HEK293 (cell line): ENCODE measurements at regions of chr12 and their contacts with region 1.

Region 1: GRCh38 chr12:69570545-69571399 is 14.5 kb upstream of the CCT2 start:
- H3K4me3 ChIP-seq: no peak overlapping the region
- H3K27ac ChIP-seq: no peak overlapping the region
- H3K4me1 ChIP-seq: no peaks in the 10 kb centered on the region
- CTCF ChIP-seq: no peak

Region 2: DNA sequence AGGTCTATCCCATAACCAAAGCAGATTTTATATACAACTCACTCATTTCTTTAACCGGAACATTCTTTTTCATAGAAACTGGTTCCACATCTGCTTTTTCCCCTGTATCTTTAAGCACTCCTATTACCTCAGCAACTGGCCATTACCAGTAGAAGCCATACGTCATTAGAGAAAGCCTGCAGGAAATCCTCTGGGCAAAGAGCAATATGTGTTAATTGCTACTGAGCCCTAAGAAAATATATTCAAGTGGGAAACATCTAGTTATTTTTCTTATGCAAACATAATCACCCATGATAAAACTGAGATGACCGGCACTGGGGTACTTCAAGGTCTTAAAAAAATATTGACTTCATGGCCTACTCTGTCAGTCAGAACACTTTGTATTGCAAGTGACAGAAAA is 359.6 kb before region 1 on chr12:
- CTCF ChIA-PET with region 1: no interaction called
- POLR2A ChIA-PET with region 1: no interaction called
- H3K4me3 ChIP-seq: no peak overlapping the region
- H3K27ac ChIP-seq: no peak overlapping the region
- H3K4me1 ChIP-seq: no peaks in the 10 kb centered on the region
- CTCF ChIP-seq: no peak

Region 3: DNA sequence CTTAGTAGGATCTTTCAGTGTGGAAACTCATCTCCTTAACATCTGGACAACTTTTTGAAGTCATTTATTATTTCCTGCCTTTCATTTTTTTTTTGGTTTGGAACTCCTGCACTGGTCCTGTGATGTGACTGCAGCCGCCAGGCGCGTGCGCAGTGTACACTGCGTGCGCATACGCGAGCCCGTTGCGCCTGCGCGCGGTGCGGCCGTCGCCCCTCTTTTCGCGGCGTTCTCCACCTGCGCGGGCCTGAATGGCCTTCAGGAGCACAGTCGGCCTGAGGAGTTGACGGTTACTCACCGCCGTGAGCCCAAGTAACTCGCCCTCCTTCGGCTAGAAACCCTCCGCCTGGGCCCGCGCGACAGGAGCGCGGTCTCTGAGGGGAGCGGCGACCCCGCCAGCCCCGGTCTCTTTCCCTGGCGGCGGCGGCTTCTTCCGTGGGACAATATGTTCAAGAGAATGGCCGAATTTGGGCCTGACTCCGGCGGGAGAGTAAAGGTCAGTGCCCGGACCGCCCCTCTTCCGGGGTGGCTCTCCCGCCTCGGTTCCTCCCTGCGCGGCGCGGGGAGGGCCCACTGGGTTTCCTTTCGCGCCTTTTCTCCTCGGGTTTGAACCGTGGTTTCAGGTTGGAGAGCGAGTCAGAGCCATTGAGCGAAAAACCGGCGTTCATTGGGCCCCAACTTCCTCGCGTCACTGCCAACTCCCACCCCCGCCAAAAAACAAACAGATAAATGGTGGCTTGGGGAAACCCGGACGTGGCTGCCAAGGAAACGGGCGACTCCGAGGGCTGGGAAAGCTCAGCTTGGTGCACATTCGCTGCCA is 211.0 kb before region 1 on chr12 and contains the start of gene YEATS4:
- CTCF ChIA-PET with region 1: interaction called, 31 read pairs
- POLR2A ChIA-PET with region 1: interaction called, 3 read pairs
- H3K4me3 ChIP-seq: peak within 1 kb of the TSS; percentile 97
- H3K27ac ChIP-seq: peak within 1 kb of the TSS; percentile 98
- H3K4me1 ChIP-seq: peaks cover 3% of the 10 kb centered on the region; the same call in 1 of the 2 replicates
- CTCF ChIP-seq: no peak

Region 4: GRCh38 chr12:69470189-69471075 is 100.3 kb before region 1 on chr12 and contains the start of gene FRS2:
- CTCF ChIA-PET with region 1: interaction called, 38 read pairs
- POLR2A ChIA-PET with region 1: interaction called, 6 read pairs
- H3K4me3 ChIP-seq: peak within 1 kb of the TSS; percentile 98
- H3K27ac ChIP-seq: peak within 1 kb of the TSS; percentile 90
- H3K4me1 ChIP-seq: peaks cover 29% of the 10 kb centered on the region
- CTCF ChIP-seq: peak; percentile 74

Region 5: GRCh38 chr12:69553627-69554248 is 17.0 kb before region 1 on chr12:
- CTCF ChIA-PET with region 1: interaction called, 63 read pairs
- POLR2A ChIA-PET with region 1: no interaction called
- H3K4me3 ChIP-seq: no peak overlapping the region
- H3K27ac ChIP-seq: no peak overlapping the region; the same call in 1 of the 2 replicates
- H3K4me1 ChIP-seq: peaks cover 9% of the 10 kb centered on the region; the same call in 1 of the 2 replicates
- CTCF ChIP-seq: no peak